Activated B cell treated with CpG ODN at 0.5 μM for 24 hours (primary cell): ENCODE measurements at regions of chr4 and their contacts with region 1.

Region 1: DNA sequence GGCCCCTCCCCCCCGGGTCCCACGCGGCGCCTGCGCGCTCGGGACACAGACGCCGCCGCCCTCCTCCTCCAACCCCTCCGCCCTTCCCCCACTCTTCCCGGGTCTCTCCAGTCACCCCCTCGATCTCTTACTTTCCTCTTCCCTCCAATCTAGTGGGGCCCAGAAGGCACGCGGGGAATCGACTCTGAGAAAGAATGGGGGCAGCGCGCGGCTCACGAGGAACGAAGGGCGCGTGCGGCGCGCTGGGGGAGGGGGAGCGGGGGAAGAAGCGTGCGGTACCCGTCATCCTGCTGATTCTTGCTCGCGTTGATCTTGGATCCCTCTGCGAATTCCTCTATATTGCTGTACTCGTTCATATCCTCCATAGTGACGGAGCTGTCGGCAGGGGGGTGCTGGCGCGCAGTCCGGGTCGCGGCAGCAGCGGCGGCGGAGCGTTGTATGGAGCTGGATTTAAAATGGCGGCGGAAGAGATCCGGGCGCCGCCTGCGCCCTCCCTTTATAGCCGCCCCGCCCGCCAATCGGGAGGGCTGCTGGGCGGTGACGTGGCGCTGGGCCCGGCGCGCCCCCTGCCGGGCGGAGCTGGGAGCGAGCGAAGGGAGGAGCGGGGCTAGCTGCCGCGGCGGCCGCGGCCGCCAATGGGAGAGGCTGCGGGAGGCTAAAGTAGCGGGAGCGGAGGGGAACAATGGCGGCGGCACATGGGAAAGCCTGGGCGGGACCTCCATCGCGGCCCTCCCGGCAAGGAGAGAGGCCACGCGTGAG is 1.1 kb downstream of the HNRNPDL start:
- DNase-seq: peak; percentile 97
- ATAC-seq: peak; percentile 59
- H3K4me3 Mint-ChIP-seq: peak overlapping the region; percentile 100
- H3K27ac Mint-ChIP-seq: peak overlapping the region; percentile 99
- H3K4me1 Mint-ChIP-seq: peaks cover 58% of the 10 kb centered on the region
- H3K27me3 Mint-ChIP-seq: no peaks in the 10 kb centered on the region
- CTCF ChIP-seq: peak; percentile 68

Region 2: GRCh38 chr4:81565142-81565870 is 863.8 kb before region 1 on chr4:
- CTCF ChIA-PET with region 1: no interaction called
- POLR2A ChIA-PET with region 1: no interaction called
- intact Hi-C with region 1: loop called (anchors 1 kb)
- DNase-seq: no peak
- ATAC-seq: no peak
- H3K4me3 Mint-ChIP-seq: peak overlapping the region; percentile 44
- H3K27ac Mint-ChIP-seq: peak overlapping the region; percentile 69
- H3K4me1 Mint-ChIP-seq: peaks cover 69% of the 10 kb centered on the region
- H3K27me3 Mint-ChIP-seq: no peaks in the 10 kb centered on the region
- CTCF ChIP-seq: no peak

Region 3: GRCh38 chr4:82373816-82374625 is 55.1 kb before region 1 on chr4 and contains the start of gene HNRNPD:
- CTCF ChIA-PET with region 1: interaction called, 7 read pairs
- POLR2A ChIA-PET with region 1: interaction called, 199 read pairs
- intact Hi-C with region 1: loop called (anchors 1 kb)
- DNase-seq: peak; percentile 83
- ATAC-seq: peak; percentile 88
- H3K4me3 Mint-ChIP-seq: peak within 1 kb of the TSS; percentile 98
- H3K27ac Mint-ChIP-seq: peak within 1 kb of the TSS; percentile 100
- H3K4me1 Mint-ChIP-seq: peaks cover 55% of the 10 kb centered on the region
- H3K27me3 Mint-ChIP-seq: no peaks in the 10 kb centered on the region
- CTCF ChIP-seq: no peak
- total RNA-seq, gene HNRNPD: 300 and 350 TPM in 2 replicates

Region 4: GRCh38 chr4:82890901-82891706 is 462.0 kb after region 1 on chr4 and contains the start of gene SEC31A:
- CTCF ChIA-PET with region 1: no interaction called
- POLR2A ChIA-PET with region 1: interaction called, 7 read pairs
- intact Hi-C with region 1: loop called (anchors 1 kb)
- DNase-seq: peak; percentile 97
- ATAC-seq: peak; percentile 92
- H3K4me3 Mint-ChIP-seq: peak within 1 kb of the TSS; percentile 93
- H3K27ac Mint-ChIP-seq: peak within 1 kb of the TSS; percentile 94
- H3K4me1 Mint-ChIP-seq: peaks cover 34% of the 10 kb centered on the region
- H3K27me3 Mint-ChIP-seq: no peaks in the 10 kb centered on the region
- CTCF ChIP-seq: no peak
- total RNA-seq, gene SEC31A: 154 and 172 TPM in 2 replicates

Region 5: DNA sequence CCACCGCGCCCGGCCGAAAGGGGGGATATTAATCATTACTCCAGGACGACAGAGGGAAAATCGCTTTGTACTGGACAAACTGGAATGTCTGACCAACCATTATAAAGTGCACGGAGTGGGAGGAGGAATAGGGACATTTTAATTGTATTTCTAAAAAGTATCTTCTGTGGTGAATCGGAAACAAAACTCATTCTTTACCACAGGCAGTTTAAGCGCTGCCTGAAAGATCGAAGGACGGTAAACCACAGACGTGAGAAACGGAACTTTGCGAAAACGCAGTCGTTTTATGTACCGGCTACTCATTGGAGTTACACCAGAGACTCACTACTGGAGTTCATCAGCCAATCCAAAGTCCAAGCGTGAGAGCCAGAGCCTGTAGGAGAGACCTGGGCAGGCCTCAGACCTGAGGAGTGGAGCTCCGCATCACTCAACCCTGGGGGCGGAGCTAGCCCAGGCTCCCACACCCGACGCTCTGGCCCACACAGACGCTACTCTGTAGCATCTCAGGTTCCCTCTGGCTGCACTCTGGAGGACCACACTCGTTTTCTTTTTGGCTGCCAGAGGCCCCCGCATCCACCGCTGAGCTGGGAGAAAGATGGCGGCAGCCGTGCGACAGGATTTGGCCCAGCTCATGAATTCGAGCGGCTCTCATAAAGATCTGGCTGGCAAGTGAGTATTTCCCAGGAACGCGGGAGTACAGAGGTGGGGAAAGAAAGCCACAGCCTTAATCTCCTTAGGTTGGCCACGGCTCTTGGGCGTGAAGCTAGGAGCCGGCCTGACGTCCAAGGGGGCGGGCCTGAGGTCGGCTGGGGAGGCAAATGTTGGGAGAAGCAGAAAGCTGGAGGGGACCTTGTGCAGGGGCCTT is 605.7 kb after region 1 on chr4 and contains the start of gene COPS4:
- CTCF ChIA-PET with region 1: no interaction called
- POLR2A ChIA-PET with region 1: interaction called, 15 read pairs
- intact Hi-C with region 1: loop called (anchors 1 kb)
- DNase-seq: peak; percentile 82
- ATAC-seq: peak; percentile 96
- H3K4me3 Mint-ChIP-seq: peak within 1 kb of the TSS; percentile 99
- H3K27ac Mint-ChIP-seq: peak within 1 kb of the TSS; percentile 100
- H3K4me1 Mint-ChIP-seq: peaks cover 31% of the 10 kb centered on the region
- H3K27me3 Mint-ChIP-seq: no peaks in the 10 kb centered on the region
- CTCF ChIP-seq: no peak
- total RNA-seq, gene COPS4: 32.7 and 36.7 TPM in 2 replicates

Region 6: GRCh38 chr4:83484500-83485461 is 1055.6 kb after region 1 on chr4 and contains the start of gene ABRAXAS1:
- CTCF ChIA-PET with region 1: no interaction called
- POLR2A ChIA-PET with region 1: no interaction called
- intact Hi-C with region 1: loop called (anchors 1 kb)
- DNase-seq: peak; percentile 96
- ATAC-seq: peak; percentile 97
- H3K4me3 Mint-ChIP-seq: peak within 1 kb of the TSS; percentile 93
- H3K27ac Mint-ChIP-seq: peak within 1 kb of the TSS; percentile 94
- H3K4me1 Mint-ChIP-seq: peaks cover 19% of the 10 kb centered on the region
- H3K27me3 Mint-ChIP-seq: no peaks in the 10 kb centered on the region
- CTCF ChIP-seq: no peak
- total RNA-seq, gene ABRAXAS1: 23.5 and 24.2 TPM in 2 replicates